CD4-positive, alpha-beta T cell (primary cell): ENCODE measurements at regions of chr1 and their contacts with region 1.

Region 1: GRCh38 chr1:204975570-204976235 is 67.3 kb upstream of the CNTN2 start:
- DNase-seq: peak in 13 of 14 experiments; percentile 12 to 66 (median 35)
- ATAC-seq: peak; percentile 69
- H3K4me3 ChIP-seq: no peak overlapping the region
- H3K4me3 Mint-ChIP-seq: no peak overlapping the region
- H3K27ac ChIP-seq: no peak overlapping the region
- H3K27ac Mint-ChIP-seq: no peak overlapping the region
- H3K4me1 ChIP-seq: no peaks in the 10 kb centered on the region
- H3K4me1 Mint-ChIP-seq: no peaks in the 10 kb centered on the region
- H3K27me3 ChIP-seq: peaks cover 0 to 3% of the 10 kb centered on the region in 2 experiments
- H3K27me3 Mint-ChIP-seq: peaks cover 43% of the 10 kb centered on the region
- CTCF ChIP-seq: peak; percentile 72

Region 2: DNA sequence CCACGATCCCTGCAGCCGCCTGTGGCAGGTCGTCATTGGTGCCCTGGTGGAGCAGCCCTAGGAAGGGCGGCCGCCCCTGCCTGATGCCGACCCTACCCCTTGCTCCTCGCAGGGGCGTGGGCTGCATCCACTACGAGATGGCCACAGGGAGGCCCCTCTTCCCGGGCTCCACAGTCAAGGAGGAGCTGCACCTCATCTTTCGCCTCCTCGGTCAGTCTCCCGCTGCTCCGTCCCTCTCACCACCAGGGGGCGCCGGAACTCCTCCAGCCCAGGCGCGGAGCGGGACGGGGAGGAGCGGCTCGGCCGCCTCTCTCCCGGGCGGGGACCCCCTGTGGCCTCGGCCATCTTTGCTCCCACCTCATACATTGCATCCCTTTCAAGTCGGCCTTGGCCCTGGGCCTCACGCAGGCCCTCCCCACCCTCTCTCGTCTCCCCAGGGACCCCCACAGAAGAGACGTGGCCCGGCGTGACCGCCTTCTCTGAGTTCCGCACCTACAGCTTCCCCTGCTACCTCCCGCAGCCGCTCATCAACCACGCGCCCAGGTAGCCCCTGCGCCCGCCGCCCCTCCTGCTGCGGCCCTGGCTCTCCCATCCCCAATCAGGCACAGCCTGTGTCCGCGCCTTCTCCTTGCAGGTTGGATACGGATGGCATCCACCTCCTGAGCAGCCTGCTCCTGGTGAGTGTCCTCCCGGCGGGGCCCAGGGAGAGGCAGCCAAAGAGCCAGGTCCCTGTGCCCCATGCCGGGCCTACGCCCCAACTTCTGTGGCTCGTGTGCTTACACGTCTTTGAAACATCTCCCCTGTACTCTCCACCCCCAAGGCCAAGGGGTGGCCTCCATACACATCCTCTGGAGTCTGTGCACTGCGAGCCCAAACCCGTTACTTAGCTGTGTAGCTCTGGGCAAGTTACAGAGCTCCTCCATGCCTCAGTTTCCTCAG is 553.5 kb after region 1 on chr1:
- CTCF ChIA-PET with region 1: no interaction called
- POLR2A ChIA-PET with region 1: no interaction called
- intact Hi-C with region 1: loop called in 1 of 2 experiments (anchors 10 kb)
- DNase-seq: peak; percentile 62 to 89 (median 80)
- ATAC-seq: peak; percentile 85
- H3K4me3 ChIP-seq: peak overlapping the region; percentile 32
- H3K4me3 Mint-ChIP-seq: no peak overlapping the region
- H3K27ac ChIP-seq: no peak overlapping the region
- H3K27ac Mint-ChIP-seq: no peak overlapping the region
- H3K4me1 ChIP-seq: peaks cover 9% of the 10 kb centered on the region
- H3K4me1 Mint-ChIP-seq: no peaks in the 10 kb centered on the region
- H3K27me3 ChIP-seq: no peaks in the 10 kb centered on the region
- H3K27me3 Mint-ChIP-seq: no peaks in the 10 kb centered on the region
- CTCF ChIP-seq: peak; percentile 85